ENCODE measurements at regions of chr11 and their contacts with region 1.

Region 1: GRCh38 chr11:11856638-11857037 is 14.9 kb downstream of the USP47 start:
- DNase-seq: peak; percentile 29 to 55 (median 40)
- H3K4me3 ChIP-seq: no peak overlapping the region
- H3K4me3 Mint-ChIP-seq: peak overlapping the region in 6 of 8 donors; percentile 29 to 81 (median 60)
- H3K27ac ChIP-seq: no peak overlapping the region
- H3K27ac Mint-ChIP-seq: peak overlapping the region; percentile 30 to 83 (median 69)
- H3K4me1 ChIP-seq: peaks cover 73% of the 10 kb centered on the region
- H3K4me1 Mint-ChIP-seq: peaks cover 46 to 77% (median 58%) of the 10 kb centered on the region in 4 donors
- H3K27me3 ChIP-seq: no peaks in the 10 kb centered on the region
- H3K27me3 Mint-ChIP-seq: no peaks in the 10 kb centered on the region

Region 2: DNA sequence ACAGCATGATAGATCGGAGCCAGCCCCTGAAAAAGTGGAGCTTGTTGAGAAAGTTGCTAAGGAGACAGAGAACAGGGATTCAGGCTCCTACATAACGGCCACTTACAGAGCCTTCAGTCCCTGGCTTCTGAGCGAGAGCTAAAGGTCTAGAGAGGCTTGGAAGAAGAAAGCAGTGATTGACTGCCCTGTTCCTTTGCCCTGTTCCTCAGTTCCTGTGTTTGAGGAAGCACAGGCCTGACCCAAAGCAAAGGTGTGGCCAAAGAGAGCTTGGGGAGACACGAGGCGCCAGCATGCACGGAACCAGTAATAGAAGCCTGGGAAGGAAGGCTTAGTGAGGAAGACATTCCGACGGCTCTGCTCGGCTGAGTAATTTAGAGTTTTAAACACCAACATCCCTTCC is 429.5 kb before region 1 on chr11:
- CTCF ChIA-PET with region 1: no interaction called
- POLR2A ChIA-PET with region 1: no interaction called
- intact Hi-C with region 1: no loop called
- DNase-seq: no peak
- H3K4me3 ChIP-seq: no peak overlapping the region
- H3K4me3 Mint-ChIP-seq: no peak overlapping the region
- H3K27ac ChIP-seq: no peak overlapping the region
- H3K27ac Mint-ChIP-seq: no peak overlapping the region
- H3K4me1 ChIP-seq: no peaks in the 10 kb centered on the region
- H3K4me1 Mint-ChIP-seq: no peaks in the 10 kb centered on the region
- H3K27me3 ChIP-seq: no peaks in the 10 kb centered on the region
- H3K27me3 Mint-ChIP-seq: no peaks in the 10 kb centered on the region

Region 3: DNA sequence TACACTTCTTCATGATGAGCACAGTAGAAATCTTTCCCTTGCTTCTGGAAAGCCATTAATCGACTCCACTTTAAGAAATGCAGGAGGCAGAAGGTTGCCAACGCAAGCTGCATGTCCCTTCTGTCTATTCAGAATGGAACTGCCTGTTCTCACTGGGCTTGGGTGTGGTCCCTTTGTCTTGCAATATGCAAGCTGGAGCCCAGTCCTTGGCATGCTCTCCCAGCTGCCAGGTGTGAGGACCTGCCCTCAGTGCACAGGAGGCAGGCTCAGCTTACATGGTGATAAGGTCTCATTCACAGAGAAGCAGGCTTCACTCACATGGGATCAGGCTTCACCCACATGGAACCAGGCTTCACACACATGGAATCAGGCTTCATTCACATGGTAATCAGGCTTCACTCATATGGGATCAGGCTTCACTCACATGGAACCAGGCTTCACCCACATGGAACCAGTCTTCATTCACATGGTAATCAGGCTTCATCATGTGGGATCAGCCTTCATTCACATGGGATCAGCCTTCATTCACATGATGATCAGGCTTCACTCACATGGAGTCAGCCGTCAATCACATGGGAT is 74.0 kb before region 1 on chr11:
- CTCF ChIA-PET with region 1: no interaction called
- POLR2A ChIA-PET with region 1: no interaction called
- intact Hi-C with region 1: no loop called
- DNase-seq: no peak
- H3K4me3 ChIP-seq: no peak overlapping the region
- H3K4me3 Mint-ChIP-seq: no peak overlapping the region
- H3K27ac ChIP-seq: no peak overlapping the region
- H3K27ac Mint-ChIP-seq: no peak overlapping the region
- H3K4me1 ChIP-seq: no peaks in the 10 kb centered on the region
- H3K4me1 Mint-ChIP-seq: no peaks in the 10 kb centered on the region
- H3K27me3 ChIP-seq: no peaks in the 10 kb centered on the region
- H3K27me3 Mint-ChIP-seq: peaks cover 12 to 14% of the 10 kb centered on the region in 2 donors

Region 4: GRCh38 chr11:11841723-11842420 is 14.8 kb before region 1 on chr11 and contains the start of gene USP47:
- CTCF ChIA-PET with region 1: interaction called, 7 read pairs
- POLR2A ChIA-PET with region 1: interaction called, 37 read pairs
- intact Hi-C with region 1: no loop called
- DNase-seq: peak; percentile 91 to 96 (median 95)
- H3K4me3 ChIP-seq: peak within 1 kb of the TSS; percentile 27 to 85
- H3K4me3 Mint-ChIP-seq: peak within 1 kb of the TSS in 1 of 8 donors; percentile 86
- H3K27ac ChIP-seq: peak within 1 kb of the TSS; percentile 98
- H3K27ac Mint-ChIP-seq: peak within 1 kb of the TSS in 4 of 7 donors; percentile 88 to 90 (median 90)
- H3K4me1 ChIP-seq: peaks cover 39% of the 10 kb centered on the region
- H3K4me1 Mint-ChIP-seq: peaks cover 0 to 24% (median 2%) of the 10 kb centered on the region in 4 donors
- H3K27me3 ChIP-seq: no peaks in the 10 kb centered on the region
- H3K27me3 Mint-ChIP-seq: peaks cover 8 to 11% of the 10 kb centered on the region in 2 donors
- total RNA-seq, gene USP47: 62.2 to 65.9 TPM

Region 5: DNA sequence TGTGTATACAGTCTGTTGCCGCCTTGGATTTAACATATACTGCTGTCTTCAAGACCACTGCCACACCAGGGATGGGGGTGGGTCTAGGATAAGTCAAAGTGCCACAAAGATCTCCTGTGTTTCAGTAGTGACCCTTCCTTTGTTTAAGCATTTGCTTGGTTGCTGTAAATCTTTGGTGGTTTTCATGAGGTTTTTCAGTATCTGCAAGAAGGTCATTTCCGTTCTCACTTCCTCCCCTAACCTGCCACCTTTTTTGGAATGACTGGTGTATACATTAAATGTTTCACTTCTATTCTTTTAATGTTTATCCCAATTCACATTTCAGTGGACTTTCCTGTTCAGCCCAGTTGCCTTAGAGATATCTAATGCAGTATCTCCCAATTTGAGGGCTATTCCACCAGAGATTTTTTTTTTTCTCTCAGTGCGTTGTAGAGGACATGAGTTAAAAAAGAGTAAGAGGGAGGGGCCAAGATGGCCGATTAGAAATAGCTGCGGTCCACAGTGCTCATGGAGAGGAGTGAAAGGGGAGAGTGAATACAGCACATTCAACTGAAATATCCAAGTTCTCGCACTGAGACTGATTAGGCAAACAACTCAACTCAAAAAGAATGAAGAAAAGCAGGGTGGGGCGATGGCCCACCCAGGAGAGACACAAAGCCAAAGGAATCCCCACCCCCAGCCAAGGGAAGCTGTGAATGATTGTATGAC is 28.3 kb after region 1 on chr11:
- CTCF ChIA-PET with region 1: no interaction called
- POLR2A ChIA-PET with region 1: no interaction called
- intact Hi-C with region 1: no loop called
- DNase-seq: peak in 1 of 5 donors; percentile 34
- H3K4me3 ChIP-seq: no peak overlapping the region
- H3K4me3 Mint-ChIP-seq: peak overlapping the region in 4 of 8 donors; percentile 5 to 61 (median 26)
- H3K27ac ChIP-seq: no peak overlapping the region
- H3K27ac Mint-ChIP-seq: peak overlapping the region in 5 of 7 donors; percentile 37 to 51 (median 45)
- H3K4me1 ChIP-seq: peaks cover 28% of the 10 kb centered on the region
- H3K4me1 Mint-ChIP-seq: peaks cover 27 to 55% (median 41%) of the 10 kb centered on the region in 4 donors
- H3K27me3 ChIP-seq: no peaks in the 10 kb centered on the region
- H3K27me3 Mint-ChIP-seq: no peaks in the 10 kb centered on the region

Region 6: GRCh38 chr11:11895672-11896071 is 39.0 kb after region 1 on chr11:
- CTCF ChIA-PET with region 1: interaction called, 4 read pairs
- POLR2A ChIA-PET with region 1: no interaction called
- intact Hi-C with region 1: loop called (anchors 5 kb)
- DNase-seq: no peak
- H3K4me3 ChIP-seq: no peak overlapping the region
- H3K4me3 Mint-ChIP-seq: no peak overlapping the region
- H3K27ac ChIP-seq: no peak overlapping the region
- H3K27ac Mint-ChIP-seq: peak overlapping the region in 2 of 7 donors; percentile 26 to 42
- H3K4me1 ChIP-seq: no peaks in the 10 kb centered on the region
- H3K4me1 Mint-ChIP-seq: peaks cover 1 to 9% (median 7%) of the 10 kb centered on the region in 4 donors
- H3K27me3 ChIP-seq: no peaks in the 10 kb centered on the region
- H3K27me3 Mint-ChIP-seq: no peaks in the 10 kb centered on the region

Region 7: DNA sequence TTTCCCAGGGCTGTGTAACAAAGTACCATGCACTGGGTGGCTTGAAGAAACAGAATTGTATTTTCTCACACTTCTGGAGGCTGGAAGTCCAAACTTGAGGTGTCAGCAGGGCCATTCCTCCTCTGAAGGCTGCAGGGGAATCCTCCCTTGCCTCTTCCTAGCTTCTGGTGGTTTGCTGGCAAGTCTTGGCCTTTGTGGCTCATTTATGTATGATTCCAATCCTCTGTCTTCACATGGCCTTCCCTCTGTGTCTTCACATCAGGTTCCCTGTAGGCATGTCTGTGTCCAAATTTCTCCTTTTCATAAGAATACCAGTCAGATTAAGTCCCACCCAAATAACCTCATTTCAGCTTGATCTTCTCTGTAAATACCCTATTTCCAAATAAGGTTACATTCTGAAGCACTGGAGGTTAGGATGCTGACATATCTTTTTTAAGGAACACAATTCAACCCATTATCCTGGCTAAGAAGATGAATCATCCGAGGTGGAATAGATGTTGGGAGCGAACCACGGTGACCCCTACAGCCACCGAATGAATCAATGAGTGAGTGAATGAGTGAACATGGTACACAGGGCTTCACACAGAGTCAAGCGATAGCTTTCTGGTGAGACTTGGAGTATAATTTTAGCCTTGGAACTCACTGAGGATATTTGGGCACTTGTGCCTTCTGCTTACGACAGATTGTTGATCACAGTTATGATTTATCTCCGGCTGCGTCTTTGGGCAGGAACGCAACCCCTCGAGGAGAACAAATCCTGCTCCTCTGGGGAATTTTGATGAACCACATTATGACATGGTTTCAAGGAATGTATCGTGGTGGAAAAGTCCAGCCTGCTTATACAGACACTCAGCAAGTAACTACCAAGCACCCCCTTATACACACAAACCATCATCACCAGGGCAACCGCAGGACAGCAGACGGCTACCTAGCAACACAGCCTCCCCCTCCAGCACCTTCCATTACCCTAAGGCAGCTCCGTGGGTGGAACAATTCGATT is 219.5 kb after region 1 on chr11:
- CTCF ChIA-PET with region 1: no interaction called
- POLR2A ChIA-PET with region 1: no interaction called
- intact Hi-C with region 1: no loop called
- DNase-seq: no peak
- H3K4me3 ChIP-seq: no peak overlapping the region
- H3K4me3 Mint-ChIP-seq: no peak overlapping the region
- H3K27ac ChIP-seq: no peak overlapping the region
- H3K27ac Mint-ChIP-seq: no peak overlapping the region
- H3K4me1 ChIP-seq: peaks cover 5% of the 10 kb centered on the region
- H3K4me1 Mint-ChIP-seq: peaks cover 2 to 7% (median 6%) of the 10 kb centered on the region in 4 donors
- H3K27me3 ChIP-seq: no peaks in the 10 kb centered on the region
- H3K27me3 Mint-ChIP-seq: peaks cover 0 to 1% of the 10 kb centered on the region in 2 donors